WTC11 (cell line): ENCODE measurements at regions of chr2 and their contacts with region 1.

Region 1: GRCh38 chr2:41937464-41937906 is 110.3 kb upstream of the PKDCC start:
- DNase-seq: peak; percentile 38
- ATAC-seq: peak; percentile 79
- H3K4me3 Mint-ChIP-seq: peak overlapping the region; percentile 16; the same call in 1 of the 2 replicates
- H3K27ac Mint-ChIP-seq: peak overlapping the region; percentile 92
- H3K4me1 Mint-ChIP-seq: peaks cover 81% of the 10 kb centered on the region
- H3K27me3 Mint-ChIP-seq: no peaks in the 10 kb centered on the region; the same call in 1 of the 2 replicates
- CTCF ChIP-seq: no peak

Region 2: GRCh38 chr2:41853427-41854216 is 83.9 kb before region 1 on chr2:
- CTCF ChIA-PET with region 1: interaction called, 10 read pairs
- POLR2A ChIA-PET with region 1: no interaction called
- DNase-seq: peak; percentile 70
- ATAC-seq: peak; percentile 77
- H3K4me3 Mint-ChIP-seq: no peak overlapping the region
- H3K27ac Mint-ChIP-seq: no peak overlapping the region
- H3K4me1 Mint-ChIP-seq: peaks cover 6% of the 10 kb centered on the region
- H3K27me3 Mint-ChIP-seq: peaks cover 3% of the 10 kb centered on the region; the same call in 1 of the 2 replicates
- CTCF ChIP-seq: peak; percentile 65

Region 3: GRCh38 chr2:41947701-41948396 is 10.4 kb after region 1 on chr2:
- CTCF ChIA-PET with region 1: interaction called, 32 read pairs
- POLR2A ChIA-PET with region 1: interaction called, 17 read pairs
- DNase-seq: no peak
- ATAC-seq: peak; percentile 60
- H3K4me3 Mint-ChIP-seq: peak overlapping the region; percentile 34
- H3K27ac Mint-ChIP-seq: peak overlapping the region; percentile 64
- H3K4me1 Mint-ChIP-seq: peaks cover 58% of the 10 kb centered on the region
- H3K27me3 Mint-ChIP-seq: peaks cover 16% of the 10 kb centered on the region
- CTCF ChIP-seq: no peak

Region 4: DNA sequence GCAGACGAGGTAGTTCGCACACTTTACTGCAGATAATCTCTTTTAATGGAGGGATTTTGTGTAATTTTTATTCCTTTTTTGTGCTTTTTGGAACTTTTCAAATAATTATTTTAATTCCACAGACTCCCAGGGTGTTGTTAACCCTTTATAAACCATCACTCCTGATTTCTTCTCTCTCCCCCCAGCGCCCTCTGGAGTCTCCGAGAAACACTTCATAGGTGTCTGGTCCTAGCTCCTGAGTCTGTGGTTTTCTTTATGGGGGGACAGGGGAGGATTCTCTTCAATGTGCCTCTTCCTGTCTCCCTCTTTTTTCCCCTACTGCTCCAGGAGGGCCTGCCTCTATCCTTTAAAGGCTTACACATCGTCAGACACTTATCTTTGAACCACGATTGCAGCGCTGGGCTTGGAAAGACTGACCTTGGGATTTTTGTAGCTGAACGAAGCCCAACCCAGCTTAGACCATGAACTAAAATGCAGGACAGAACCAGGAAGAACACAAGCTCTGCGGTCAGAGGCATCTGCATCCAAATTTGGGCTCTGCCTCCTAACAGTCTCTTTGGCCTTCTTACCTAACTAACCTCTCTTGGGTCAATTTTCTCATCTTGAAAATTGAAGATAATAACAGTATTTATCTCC is 103.3 kb after region 1 on chr2:
- CTCF ChIA-PET with region 1: interaction called, 31 read pairs
- POLR2A ChIA-PET with region 1: interaction called, 28 read pairs
- DNase-seq: no peak
- ATAC-seq: peak; percentile 80
- H3K4me3 Mint-ChIP-seq: no peak overlapping the region
- H3K27ac Mint-ChIP-seq: no peak overlapping the region
- H3K4me1 Mint-ChIP-seq: peaks cover 39% of the 10 kb centered on the region
- H3K27me3 Mint-ChIP-seq: no peaks in the 10 kb centered on the region
- CTCF ChIP-seq: no peak

Region 5: GRCh38 chr2:42047488-42048298 is 110.2 kb after region 1 on chr2 and contains the start of gene PKDCC:
- CTCF ChIA-PET with region 1: interaction called, 31 read pairs
- POLR2A ChIA-PET with region 1: interaction called, 28 read pairs
- DNase-seq: peak; percentile 85
- ATAC-seq: peak; percentile 66
- H3K4me3 Mint-ChIP-seq: peak within 1 kb of the TSS; percentile 79
- H3K27ac Mint-ChIP-seq: peak within 1 kb of the TSS; percentile 80; the same call in 1 of the 2 replicates
- H3K4me1 Mint-ChIP-seq: peaks cover 72% of the 10 kb centered on the region
- H3K27me3 Mint-ChIP-seq: peaks cover 20% of the 10 kb centered on the region
- CTCF ChIP-seq: no peak
- total RNA-seq, gene PKDCC: 15.1 to 27.3 TPM (median 15.6 TPM) in 3 replicates

Region 6: GRCh38 chr2:42053791-42054701 is 116.6 kb after region 1 on chr2:
- CTCF ChIA-PET with region 1: interaction called, 15 read pairs
- POLR2A ChIA-PET with region 1: interaction called, 4 read pairs
- DNase-seq: no peak
- ATAC-seq: no peak
- H3K4me3 Mint-ChIP-seq: no peak overlapping the region
- H3K27ac Mint-ChIP-seq: peak overlapping the region; percentile 45; the same call in 1 of the 2 replicates
- H3K4me1 Mint-ChIP-seq: peaks cover 63% of the 10 kb centered on the region
- H3K27me3 Mint-ChIP-seq: peaks cover 14% of the 10 kb centered on the region
- CTCF ChIP-seq: no peak